ENCODE measurements at regions of chr11 and their contacts with region 1.

Region 1: DNA sequence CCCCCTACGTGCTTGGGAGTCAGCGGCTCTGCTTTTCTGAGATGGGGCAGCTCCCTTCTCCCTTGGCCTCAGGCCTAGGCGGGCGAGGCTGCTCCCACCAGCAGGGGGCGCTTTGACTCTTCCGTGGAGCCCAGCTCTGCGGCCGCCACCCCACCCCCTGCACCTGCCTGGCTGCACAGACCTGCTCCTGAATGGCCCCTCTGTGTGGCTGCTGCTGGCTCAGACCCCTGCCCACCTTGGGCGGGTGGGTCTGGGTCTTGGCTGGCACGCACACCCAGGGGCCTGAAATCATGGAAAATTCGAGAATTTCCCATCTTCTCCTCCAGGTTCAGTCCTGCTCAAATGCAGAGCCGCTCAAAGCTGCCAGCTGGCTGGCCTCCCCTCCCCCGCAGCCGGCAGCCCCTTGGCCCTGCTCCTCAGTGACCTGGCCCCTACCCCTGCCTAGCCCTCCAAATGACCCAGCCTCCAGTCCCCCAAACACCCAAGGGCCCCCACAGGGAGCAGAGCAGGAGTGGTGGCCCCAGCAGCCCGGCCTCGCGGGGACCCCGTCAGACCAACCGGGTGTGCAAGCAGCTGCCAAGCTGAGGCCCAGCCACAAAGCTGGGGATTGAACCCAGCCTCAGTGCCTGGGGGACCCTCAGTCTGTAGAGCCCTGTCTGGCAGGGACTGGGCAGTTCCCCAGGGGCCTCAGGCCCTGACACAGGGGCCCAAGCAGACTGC is 9.0 kb downstream of the PRR33 start:
- H3K4me3 ChIP-seq: no peak overlapping the region
- H3K27ac ChIP-seq: no peak overlapping the region
- H3K4me1 ChIP-seq: no peaks in the 10 kb centered on the region
- CTCF ChIP-seq: peak; percentile 82

Region 2: DNA sequence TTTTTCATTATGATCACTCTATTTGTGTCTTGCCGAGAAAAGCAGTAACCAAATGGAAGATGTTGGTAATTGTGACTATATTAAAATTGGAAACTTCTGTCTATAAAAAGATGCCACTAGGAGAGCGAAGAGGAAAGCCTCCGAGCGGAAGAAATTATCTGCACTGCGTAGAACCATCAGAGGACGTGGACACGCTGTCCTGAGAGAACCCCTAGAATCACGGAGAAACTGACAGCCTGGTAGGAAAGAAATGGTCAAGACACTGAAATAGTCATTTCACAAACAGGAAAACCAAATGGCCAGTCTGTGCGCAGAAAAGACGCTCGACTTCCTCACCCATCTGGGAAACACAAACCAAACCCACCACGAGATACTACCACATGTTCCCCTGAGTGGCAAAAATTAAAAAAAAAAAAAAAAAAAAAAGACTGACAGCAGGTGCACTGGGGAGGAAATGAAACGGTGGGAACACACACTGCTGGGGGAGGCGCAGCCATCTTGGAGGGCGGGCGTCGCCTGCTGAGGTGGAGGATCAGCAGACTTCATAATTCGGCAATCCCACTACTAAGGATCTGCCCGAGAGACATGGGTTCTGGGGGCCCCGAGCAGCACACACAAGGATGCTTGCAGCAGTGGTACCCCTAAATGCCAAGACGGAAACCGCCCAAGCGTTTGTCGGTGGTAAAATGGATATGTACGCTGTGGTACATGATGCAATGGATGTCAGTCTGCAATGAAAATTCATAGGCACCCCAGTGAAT is 153.6 kb before region 1 on chr11:
- CTCF ChIA-PET with region 1: no interaction called
- POLR2A ChIA-PET with region 1: no interaction called
- H3K4me3 ChIP-seq: no peak overlapping the region
- H3K27ac ChIP-seq: no peak overlapping the region
- H3K4me1 ChIP-seq: no peaks in the 10 kb centered on the region
- CTCF ChIP-seq: no peak

Region 3: GRCh38 chr11:1921574-1922141 is 39.0 kb after region 1 on chr11:
- CTCF ChIA-PET with region 1: interaction called, 12 read pairs
- POLR2A ChIA-PET with region 1: no interaction called
- H3K4me3 ChIP-seq: no peak overlapping the region
- H3K27ac ChIP-seq: no peak overlapping the region
- H3K4me1 ChIP-seq: no peaks in the 10 kb centered on the region
- CTCF ChIP-seq: no peak

Region 4: DNA sequence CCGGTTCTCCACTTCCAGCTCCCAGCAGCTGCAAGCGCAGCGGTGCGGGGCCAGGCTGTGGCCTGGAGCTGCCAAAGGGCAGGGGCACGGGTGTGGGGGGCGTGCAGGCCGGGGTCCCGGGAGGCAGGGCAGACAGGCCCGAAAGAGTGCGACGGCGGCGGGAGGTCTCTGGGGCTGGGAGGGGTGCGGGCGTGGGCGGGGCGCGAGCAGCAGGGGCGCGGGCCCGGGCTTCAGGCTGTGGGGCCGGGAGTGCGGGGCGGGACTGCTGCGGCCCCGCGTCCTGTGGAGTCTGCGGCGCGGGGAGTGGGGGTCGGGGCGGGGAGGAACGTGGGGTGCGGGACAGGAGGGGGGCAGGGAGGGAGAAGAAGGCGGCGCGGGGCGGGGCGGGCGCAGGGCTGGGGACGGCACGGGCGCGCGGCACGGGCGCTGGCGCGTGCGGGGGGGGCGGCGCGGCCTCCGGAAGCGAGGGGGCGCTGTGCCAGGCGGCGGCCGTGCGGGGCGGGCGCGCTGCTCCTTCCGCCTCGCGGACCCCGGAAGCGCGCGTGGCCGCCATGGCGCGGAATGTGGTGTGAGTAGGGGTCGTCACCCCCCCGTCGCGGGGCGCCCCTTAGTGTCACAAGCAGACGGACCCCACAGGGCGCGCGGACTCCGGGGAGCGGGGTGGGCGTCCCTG is 64.3 kb after region 1 on chr11 and contains the start of gene MRPL23:
- CTCF ChIA-PET with region 1: interaction called, 16 read pairs
- POLR2A ChIA-PET with region 1: no interaction called
- H3K4me3 ChIP-seq: no peak within 1 kb of the TSS
- H3K27ac ChIP-seq: no peak within 1 kb of the TSS
- H3K4me1 ChIP-seq: no peaks in the 10 kb centered on the region
- CTCF ChIP-seq: no peak

Region 5: GRCh38 chr11:2002807-2003206 is 120.1 kb after region 1 on chr11:
- CTCF ChIA-PET with region 1: interaction called, 22 read pairs
- POLR2A ChIA-PET with region 1: no interaction called
- H3K4me3 ChIP-seq: no peak overlapping the region
- H3K27ac ChIP-seq: no peak overlapping the region
- H3K4me1 ChIP-seq: no peaks in the 10 kb centered on the region
- CTCF ChIP-seq: no peak

Region 6: DNA sequence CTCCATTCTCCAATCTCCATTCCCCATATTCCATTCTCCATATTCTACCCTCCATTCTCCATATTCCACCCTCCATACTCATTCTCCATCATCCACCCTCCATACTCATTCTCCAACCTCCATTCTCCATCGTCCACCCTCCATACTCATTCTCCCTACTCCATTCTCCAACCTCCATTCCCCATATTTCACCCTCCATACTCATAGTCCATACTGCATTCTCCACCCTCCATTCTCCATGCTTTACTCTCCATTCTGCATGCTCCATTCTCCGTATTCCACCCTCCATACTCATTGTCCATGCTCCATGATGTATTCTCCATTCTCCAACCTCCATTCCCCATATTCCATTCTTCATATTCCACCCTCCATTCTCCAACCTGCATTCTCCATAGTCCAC is 159.3 kb after region 1 on chr11:
- CTCF ChIA-PET with region 1: no interaction called
- POLR2A ChIA-PET with region 1: no interaction called
- H3K4me3 ChIP-seq: no peak overlapping the region
- H3K27ac ChIP-seq: no peak overlapping the region
- H3K4me1 ChIP-seq: no peaks in the 10 kb centered on the region
- CTCF ChIP-seq: no peak